B cell (primary cell): ENCODE measurements at regions of chr19 and their contacts with region 1.

Region 1: DNA sequence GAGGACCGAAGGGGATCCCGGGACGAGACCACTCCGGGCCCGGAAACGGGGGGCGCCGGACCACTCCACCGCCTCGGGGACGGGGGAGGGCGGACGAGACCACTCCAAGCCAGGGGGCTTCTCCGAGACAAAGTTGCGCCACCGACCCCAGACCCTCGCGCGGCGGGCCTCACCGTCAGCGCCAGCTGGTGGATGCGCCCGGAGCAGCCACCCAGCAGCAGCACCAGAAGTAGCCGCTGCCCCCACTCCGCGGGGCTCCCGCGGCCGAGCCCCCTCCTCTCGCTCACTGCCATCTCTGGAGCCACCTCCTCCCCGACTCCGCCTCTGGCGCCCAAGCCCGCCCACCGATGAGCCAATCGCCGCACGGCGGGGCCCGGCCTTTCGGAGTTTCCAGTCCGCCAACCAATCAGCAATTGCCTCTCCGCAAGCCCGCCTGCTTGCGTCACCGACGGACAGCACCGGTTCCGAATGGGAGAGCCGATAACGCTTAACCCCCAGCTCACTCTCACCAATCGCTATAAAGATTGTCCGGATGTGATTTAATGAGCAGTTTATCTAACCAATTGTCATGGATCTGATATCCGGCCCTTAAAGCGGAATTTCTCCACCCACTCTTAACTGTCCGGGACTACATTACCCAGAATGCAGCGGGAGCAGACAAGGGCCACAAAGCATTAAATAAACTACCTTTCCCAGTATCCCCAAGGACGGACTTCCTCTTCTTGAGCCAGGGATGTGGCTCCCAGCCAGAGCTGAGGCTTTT is at the start of gene GPR108:
- DNase-seq: peak; percentile 99
- ATAC-seq: peak; percentile 73
- H3K4me3 ChIP-seq: peak within 1 kb of the TSS; percentile 69 to 89 (median 88)
- H3K4me3 Mint-ChIP-seq: peak within 1 kb of the TSS; percentile 94
- H3K27ac ChIP-seq: peak within 1 kb of the TSS; percentile 90 to 98
- H3K27ac Mint-ChIP-seq: peak within 1 kb of the TSS; percentile 99
- H3K4me1 ChIP-seq: peaks cover 39 to 51% of the 10 kb centered on the region in 2 donors
- H3K4me1 Mint-ChIP-seq: peaks cover 39% of the 10 kb centered on the region
- H3K27me3 ChIP-seq: no peaks in the 10 kb centered on the region
- H3K27me3 Mint-ChIP-seq: no peaks in the 10 kb centered on the region
- CTCF ChIP-seq: no peak
- total RNA-seq, gene GPR108: 78.8 and 79.0 TPM in 2 replicates

Region 2: GRCh38 chr19:6362027-6362350 is 375.5 kb before region 1 on chr19:
- CTCF ChIA-PET with region 1: no interaction called
- POLR2A ChIA-PET with region 1: no interaction called
- intact Hi-C with region 1: loop called (anchors 1 kb)
- DNase-seq: no peak
- ATAC-seq: no peak
- H3K4me3 ChIP-seq: peak overlapping the region in 4 of 5 experiments; percentile 60 to 72 (median 66)
- H3K4me3 Mint-ChIP-seq: peak overlapping the region; percentile 94
- H3K27ac ChIP-seq: peak overlapping the region; percentile 60 to 79
- H3K27ac Mint-ChIP-seq: peak overlapping the region; percentile 92
- H3K4me1 ChIP-seq: peaks cover 6 to 12% of the 10 kb centered on the region in 2 donors
- H3K4me1 Mint-ChIP-seq: peaks cover 14% of the 10 kb centered on the region
- H3K27me3 ChIP-seq: no peaks in the 10 kb centered on the region
- H3K27me3 Mint-ChIP-seq: no peaks in the 10 kb centered on the region
- CTCF ChIP-seq: no peak

Region 3: GRCh38 chr19:6460101-6460853 is 277.2 kb before region 1 on chr19:
- CTCF ChIA-PET with region 1: no interaction called
- POLR2A ChIA-PET with region 1: no interaction called
- intact Hi-C with region 1: loop called (anchors 1 kb)
- DNase-seq: peak; percentile 99
- ATAC-seq: peak; percentile 84
- H3K4me3 ChIP-seq: peak overlapping the region; percentile 60 to 93 (median 78)
- H3K4me3 Mint-ChIP-seq: peak overlapping the region; percentile 91
- H3K27ac ChIP-seq: peak overlapping the region; percentile 76 to 86
- H3K27ac Mint-ChIP-seq: peak overlapping the region; percentile 78
- H3K4me1 ChIP-seq: peaks cover 11 to 34% of the 10 kb centered on the region in 2 donors
- H3K4me1 Mint-ChIP-seq: peaks cover 32% of the 10 kb centered on the region
- H3K27me3 ChIP-seq: peaks cover 0 to 15% (median 6%) of the 10 kb centered on the region in 4 experiments
- H3K27me3 Mint-ChIP-seq: no peaks in the 10 kb centered on the region
- CTCF ChIP-seq: peak; percentile 78

Region 4: DNA sequence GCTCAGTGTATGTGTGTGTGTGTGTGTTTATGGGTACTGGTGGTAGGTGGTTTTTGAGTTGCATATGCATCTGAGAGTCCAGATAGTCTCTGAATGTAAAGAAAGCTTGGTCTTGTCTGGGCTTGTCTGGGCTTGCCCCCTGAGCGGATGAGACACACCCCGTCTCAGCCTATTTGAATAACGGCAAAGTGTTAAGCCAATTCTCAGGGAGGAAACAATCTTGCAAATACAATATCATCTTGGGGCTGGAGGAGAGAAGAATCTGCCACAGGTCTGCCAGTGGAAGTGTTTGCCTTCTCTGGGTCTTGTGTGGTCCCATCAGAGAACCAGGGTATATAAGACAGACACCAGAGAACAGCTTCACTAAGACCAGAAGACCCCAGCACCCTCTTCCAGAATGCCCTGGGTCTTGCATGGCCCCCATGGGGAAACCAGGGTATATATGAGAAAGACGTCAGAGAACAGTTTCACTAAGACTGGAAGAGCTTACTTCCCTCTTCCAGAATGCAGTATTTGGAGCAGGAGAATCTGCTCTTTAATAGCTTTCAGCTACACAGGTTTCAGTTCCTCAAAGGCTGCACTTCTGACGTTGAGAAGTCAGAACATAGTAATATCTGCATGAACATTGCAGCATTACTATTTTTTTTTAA is 159.9 kb before region 1 on chr19:
- CTCF ChIA-PET with region 1: interaction called, 3 read pairs
- POLR2A ChIA-PET with region 1: no interaction called
- intact Hi-C with region 1: loop called (anchors 5 kb)
- DNase-seq: peak; percentile 88
- ATAC-seq: peak; percentile 85
- H3K4me3 ChIP-seq: peak overlapping the region in 1 of 5 experiments; percentile 3
- H3K4me3 Mint-ChIP-seq: no peak overlapping the region
- H3K27ac ChIP-seq: peak overlapping the region; percentile 68 to 78
- H3K27ac Mint-ChIP-seq: no peak overlapping the region
- H3K4me1 ChIP-seq: peaks cover 16 to 28% of the 10 kb centered on the region in 2 donors
- H3K4me1 Mint-ChIP-seq: peaks cover 21% of the 10 kb centered on the region
- H3K27me3 ChIP-seq: peaks cover 0 to 5% (median 0%) of the 10 kb centered on the region in 4 experiments
- H3K27me3 Mint-ChIP-seq: no peaks in the 10 kb centered on the region
- CTCF ChIP-seq: no peak

Region 5: DNA sequence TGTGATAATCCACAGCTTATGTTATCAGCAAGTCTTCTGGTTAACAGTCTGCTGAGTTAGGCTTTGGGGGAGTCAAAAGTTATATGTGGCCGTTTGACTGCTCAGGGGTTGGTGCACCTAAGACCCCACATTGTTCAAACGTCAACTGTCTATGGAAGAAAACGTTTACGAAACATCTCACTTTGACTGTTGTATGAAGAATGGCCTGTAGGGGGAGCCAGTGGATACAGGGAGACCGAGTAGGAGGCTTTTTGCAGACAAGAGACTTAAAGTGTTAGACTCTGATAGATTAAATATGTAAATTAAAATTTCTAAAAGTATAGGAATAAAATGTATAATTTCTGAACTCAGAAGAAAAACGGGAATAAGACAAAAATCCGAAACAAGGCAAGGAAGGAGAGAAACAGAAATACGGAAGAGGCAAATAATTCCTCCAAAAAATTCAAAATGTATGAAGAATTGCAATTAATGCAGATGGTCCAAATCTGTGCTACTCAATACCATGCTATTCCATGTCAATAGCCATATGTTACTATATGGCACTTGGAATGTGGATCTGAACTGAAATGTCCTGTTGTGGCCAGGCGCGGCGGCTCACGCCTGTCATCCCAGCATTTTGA is 105.4 kb before region 1 on chr19:
- CTCF ChIA-PET with region 1: interaction called, 56 read pairs
- POLR2A ChIA-PET with region 1: interaction called, 3 read pairs
- intact Hi-C with region 1: loop called (anchors 1 kb)
- DNase-seq: peak; percentile 87
- ATAC-seq: peak; percentile 78
- H3K4me3 ChIP-seq: no peak overlapping the region
- H3K4me3 Mint-ChIP-seq: no peak overlapping the region
- H3K27ac ChIP-seq: no peak overlapping the region
- H3K27ac Mint-ChIP-seq: no peak overlapping the region
- H3K4me1 ChIP-seq: peaks cover 5 to 8% of the 10 kb centered on the region in 2 donors
- H3K4me1 Mint-ChIP-seq: peaks cover 26% of the 10 kb centered on the region
- H3K27me3 ChIP-seq: no peaks in the 10 kb centered on the region
- H3K27me3 Mint-ChIP-seq: peaks cover 3% of the 10 kb centered on the region
- CTCF ChIP-seq: peak; percentile 92

Region 6: GRCh38 chr19:6753178-6754031 is 15.9 kb after region 1 on chr19:
- CTCF ChIA-PET with region 1: interaction called, 22 read pairs
- POLR2A ChIA-PET with region 1: interaction called, 6 read pairs
- intact Hi-C with region 1: loop called (anchors 1 kb)
- DNase-seq: peak; percentile 92
- ATAC-seq: peak; percentile 91
- H3K4me3 ChIP-seq: peak overlapping the region in 4 of 5 experiments; percentile 41 to 65 (median 58)
- H3K4me3 Mint-ChIP-seq: peak overlapping the region; percentile 94
- H3K27ac ChIP-seq: peak overlapping the region in 1 of 2 donors; percentile 35
- H3K27ac Mint-ChIP-seq: peak overlapping the region; percentile 96
- H3K4me1 ChIP-seq: peaks cover 14 to 29% of the 10 kb centered on the region in 2 donors
- H3K4me1 Mint-ChIP-seq: peaks cover 26% of the 10 kb centered on the region
- H3K27me3 ChIP-seq: no peaks in the 10 kb centered on the region
- H3K27me3 Mint-ChIP-seq: no peaks in the 10 kb centered on the region
- CTCF ChIP-seq: peak; percentile 68

Region 7: DNA sequence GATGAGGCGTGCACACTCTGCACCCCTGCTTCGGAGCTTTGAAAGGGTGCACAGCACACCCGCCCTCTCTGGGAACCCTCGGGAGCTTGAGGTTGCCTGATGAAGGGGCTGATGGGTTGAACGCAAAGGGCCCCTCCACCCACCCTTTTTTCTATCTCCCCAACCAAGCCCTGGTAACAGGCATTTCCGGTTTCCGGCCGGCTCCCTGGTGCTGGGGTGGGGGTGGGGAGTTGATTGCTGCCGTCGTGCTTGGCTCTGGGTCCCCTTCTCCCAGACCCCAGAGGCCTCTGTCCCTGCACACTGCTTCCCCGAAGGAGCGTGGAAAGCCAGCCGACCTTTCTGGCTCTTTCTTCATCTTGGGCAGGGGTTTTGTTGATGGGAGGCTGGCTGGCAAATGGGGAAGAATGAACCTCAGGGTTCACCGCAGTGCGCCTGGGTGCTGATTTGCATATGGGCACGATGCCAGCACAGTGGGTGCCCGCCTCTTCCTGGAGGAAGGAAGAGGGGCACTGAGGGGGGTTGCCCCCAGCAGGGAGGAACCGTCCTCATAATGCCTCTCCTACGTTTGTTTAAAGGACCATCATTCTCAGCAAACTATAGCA is 64.1 kb after region 1 on chr19:
- CTCF ChIA-PET with region 1: interaction called, 29 read pairs
- POLR2A ChIA-PET with region 1: interaction called, 5 read pairs
- intact Hi-C with region 1: loop called (anchors 1 kb)
- DNase-seq: peak; percentile 95
- ATAC-seq: peak; percentile 74
- H3K4me3 ChIP-seq: peak overlapping the region; percentile 32 to 68 (median 61)
- H3K4me3 Mint-ChIP-seq: peak overlapping the region; percentile 95
- H3K27ac ChIP-seq: peak overlapping the region; percentile 75 to 83
- H3K27ac Mint-ChIP-seq: peak overlapping the region; percentile 98
- H3K4me1 ChIP-seq: peaks cover 44 to 83% of the 10 kb centered on the region in 2 donors
- H3K4me1 Mint-ChIP-seq: peaks cover 68% of the 10 kb centered on the region
- H3K27me3 ChIP-seq: no peaks in the 10 kb centered on the region
- H3K27me3 Mint-ChIP-seq: no peaks in the 10 kb centered on the region
- CTCF ChIP-seq: no peak